ENCODE measurements at regions of chr19 and their contacts with region 1.

Region 1: DNA sequence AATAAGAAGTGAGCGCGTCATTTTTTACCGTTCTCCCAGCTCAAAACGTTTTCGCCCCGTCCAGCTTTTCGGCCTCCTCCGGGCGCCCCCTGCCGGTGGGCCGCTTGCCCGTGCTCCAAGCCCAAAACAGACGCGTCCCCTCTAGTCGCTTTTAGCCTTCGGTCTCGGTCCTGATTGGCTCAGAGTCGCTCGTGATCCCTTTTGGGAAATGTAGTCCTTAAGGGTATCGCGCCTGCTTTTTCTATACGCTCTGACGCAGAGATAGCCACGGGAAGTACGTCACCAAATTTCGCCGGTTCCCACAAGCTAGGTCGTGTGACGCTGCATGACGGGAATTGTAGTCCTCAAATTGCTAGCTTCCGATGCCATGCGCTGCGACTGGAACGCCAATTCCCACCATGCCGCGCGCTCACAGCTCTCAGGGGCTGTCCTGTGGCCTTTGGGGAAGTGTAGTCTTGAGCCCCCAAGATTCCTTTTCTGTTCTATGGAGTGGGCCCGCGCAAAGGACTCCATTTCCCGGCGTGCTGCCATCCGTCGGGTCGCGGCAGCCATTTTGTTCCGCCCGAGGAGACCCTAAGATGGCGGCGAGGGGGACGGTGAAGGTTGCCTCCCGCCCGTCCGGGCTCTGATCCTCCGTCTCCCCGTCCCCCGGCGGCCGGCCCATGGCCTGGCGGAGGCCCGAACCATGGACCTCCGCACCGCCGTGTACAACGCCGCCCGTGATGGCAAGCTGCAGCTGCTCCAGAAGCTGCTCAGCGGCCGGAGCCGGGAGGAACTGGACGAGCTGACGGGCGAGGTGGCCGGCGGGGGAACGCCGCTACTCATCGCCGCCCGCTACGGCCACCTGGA is at the start of gene FEM1A:
- DNase-seq: peak; percentile 100
- ATAC-seq: peak; percentile 94
- H3K4me3 ChIP-seq: peak within 1 kb of the TSS; percentile 75 to 87
- H3K27ac ChIP-seq: peak within 1 kb of the TSS; percentile 97
- H3K4me1 ChIP-seq: peaks cover 12 to 20% of the 10 kb centered on the region in 2 experiments
- H3K27me3 ChIP-seq: no peaks in the 10 kb centered on the region
- CTCF ChIP-seq: peak; percentile 97 to 99 (median 97)
- POLR2A ChIP-seq: peak; percentile 62
- RAD21 ChIP-seq: peak; percentile 96
- total RNA-seq, gene FEM1A: 17.7 TPM

Region 2: GRCh38 chr19:4669723-4670480 is 121.5 kb before region 1 on chr19 and contains the start of gene MYDGF:
- CTCF ChIA-PET with region 1: interaction called, 4 read pairs
- POLR2A ChIA-PET with region 1: interaction called, 3 read pairs
- RAD21 ChIA-PET with region 1: interaction called in 1 of 2 experiments, 3 read pairs
- intact Hi-C with region 1: loop called (anchors 2 kb)
- DNase-seq: peak; percentile 74
- ATAC-seq: peak; percentile 89
- H3K4me3 ChIP-seq: peak within 1 kb of the TSS; percentile 94 to 95
- H3K27ac ChIP-seq: peak within 1 kb of the TSS; percentile 92
- H3K4me1 ChIP-seq: peaks cover 18 to 25% of the 10 kb centered on the region in 2 experiments
- H3K27me3 ChIP-seq: no peaks in the 10 kb centered on the region
- CTCF ChIP-seq: no peak
- POLR2A ChIP-seq: peak; percentile 50
- RAD21 ChIP-seq: no peak
- total RNA-seq, gene MYDGF: 110 TPM

Region 3: GRCh38 chr19:4723367-4724187 is 67.8 kb before region 1 on chr19 and contains the start of gene DPP9:
- CTCF ChIA-PET with region 1: interaction called, 19 read pairs
- POLR2A ChIA-PET with region 1: interaction called, 14 read pairs
- RAD21 ChIA-PET with region 1: interaction called, 3 to 4 read pairs
- intact Hi-C with region 1: loop called (anchors 2 kb)
- DNase-seq: peak; percentile 98
- ATAC-seq: peak; percentile 84
- H3K4me3 ChIP-seq: peak within 1 kb of the TSS; percentile 90 to 100
- H3K27ac ChIP-seq: peak within 1 kb of the TSS; percentile 85
- H3K4me1 ChIP-seq: peaks cover 25 to 42% of the 10 kb centered on the region in 2 experiments
- H3K27me3 ChIP-seq: no peaks in the 10 kb centered on the region
- CTCF ChIP-seq: no peak
- POLR2A ChIP-seq: no peak
- RAD21 ChIP-seq: no peak; the same call in none of the 2 replicates
- total RNA-seq, gene DPP9: 67.6 TPM

Region 4: GRCh38 chr19:4732680-4733114 is 58.7 kb before region 1 on chr19:
- CTCF ChIA-PET with region 1: interaction called, 94 read pairs
- POLR2A ChIA-PET with region 1: interaction called, 5 read pairs
- RAD21 ChIA-PET with region 1: interaction called, 12 to 13 read pairs
- intact Hi-C with region 1: loop called (anchors 1 kb)
- DNase-seq: peak; percentile 58
- ATAC-seq: peak; percentile 93
- H3K4me3 ChIP-seq: peak overlapping the region in 1 of 2 experiments; percentile 40; a peak in 2 of 4 replicates
- H3K27ac ChIP-seq: no peak overlapping the region
- H3K4me1 ChIP-seq: peaks cover 2 to 8% of the 10 kb centered on the region in 2 experiments; a peak in 2 of 4 replicates
- H3K27me3 ChIP-seq: no peaks in the 10 kb centered on the region
- CTCF ChIP-seq: peak; percentile 64 to 94 (median 75)
- POLR2A ChIP-seq: no peak
- RAD21 ChIP-seq: peak; percentile 93